ENCODE measurements at regions of chr11 and their contacts with region 1.

Region 1: GRCh38 chr11:43573233-43573632 is 107.3 kb upstream of the HSD17B12 start:
- DNase-seq: peak in 1 of 2 experiments; percentile 70
- H3K4me3 ChIP-seq: no peak overlapping the region; a peak in 1 of 8 replicates
- H3K27ac ChIP-seq: no peak overlapping the region
- H3K4me1 ChIP-seq: peaks cover 5 to 15% (median 6%) of the 10 kb centered on the region in 4 experiments
- H3K27me3 ChIP-seq: peaks cover 44 to 66% (median 60%) of the 10 kb centered on the region in 4 experiments
- CTCF ChIP-seq: peak; percentile 70 to 94 (median 87)
- EP300 ChIP-seq: no peak
- POLR2A ChIP-seq: no peak
- RAD21 ChIP-seq: peak; percentile 85 to 86

Region 2: DNA sequence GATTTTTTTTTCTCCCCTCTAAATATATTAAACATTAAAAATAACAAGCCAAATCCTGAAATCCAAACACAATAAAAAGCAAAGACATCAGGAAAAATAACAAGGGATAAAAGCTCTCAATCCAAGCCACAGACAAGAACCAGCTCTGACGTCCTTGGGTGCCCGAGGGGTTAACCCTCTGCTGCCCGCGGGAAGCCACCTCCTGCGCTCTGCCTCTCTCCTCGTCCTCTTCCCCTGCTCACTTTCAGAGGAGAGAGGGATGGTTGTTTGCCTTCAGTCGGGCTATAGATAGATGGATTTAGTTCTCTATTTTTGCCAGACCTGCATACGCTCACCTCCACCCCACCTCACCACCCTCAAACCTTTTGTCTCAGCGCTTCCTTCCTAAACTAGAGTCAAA is 35.4 kb before region 1 on chr11:
- CTCF ChIA-PET with region 1: interaction called, 1,064 read pairs
- POLR2A ChIA-PET with region 1: no interaction called
- DNase-seq: no peak
- H3K4me3 ChIP-seq: peak overlapping the region in 1 of 4 experiments; percentile 21; a peak in 1 of 8 replicates
- H3K27ac ChIP-seq: no peak overlapping the region
- H3K4me1 ChIP-seq: peaks cover 2 to 6% (median 3%) of the 10 kb centered on the region in 4 experiments; a peak in 5 of 7 replicates
- H3K27me3 ChIP-seq: peaks cover 0 to 7% (median 3%) of the 10 kb centered on the region in 4 experiments; a peak in 2 of 7 replicates
- CTCF ChIP-seq: no peak
- EP300 ChIP-seq: no peak
- POLR2A ChIP-seq: no peak
- RAD21 ChIP-seq: no peak

Region 3: GRCh38 chr11:43818220-43818619 is 245.0 kb after region 1 on chr11:
- CTCF ChIA-PET with region 1: no interaction called
- POLR2A ChIA-PET with region 1: no interaction called
- DNase-seq: no peak
- H3K4me3 ChIP-seq: no peak overlapping the region
- H3K27ac ChIP-seq: no peak overlapping the region
- H3K4me1 ChIP-seq: no peaks in the 10 kb centered on the region
- H3K27me3 ChIP-seq: peaks cover 0 to 1% (median 0%) of the 10 kb centered on the region in 4 experiments; a peak in 1 of 7 replicates
- CTCF ChIP-seq: no peak
- EP300 ChIP-seq: no peak
- POLR2A ChIP-seq: no peak
- RAD21 ChIP-seq: no peak

Measured in H1 (cell line).